T-cell (primary cell): ENCODE measurements at regions of chr17 and their contacts with region 1.

Region 1: DNA sequence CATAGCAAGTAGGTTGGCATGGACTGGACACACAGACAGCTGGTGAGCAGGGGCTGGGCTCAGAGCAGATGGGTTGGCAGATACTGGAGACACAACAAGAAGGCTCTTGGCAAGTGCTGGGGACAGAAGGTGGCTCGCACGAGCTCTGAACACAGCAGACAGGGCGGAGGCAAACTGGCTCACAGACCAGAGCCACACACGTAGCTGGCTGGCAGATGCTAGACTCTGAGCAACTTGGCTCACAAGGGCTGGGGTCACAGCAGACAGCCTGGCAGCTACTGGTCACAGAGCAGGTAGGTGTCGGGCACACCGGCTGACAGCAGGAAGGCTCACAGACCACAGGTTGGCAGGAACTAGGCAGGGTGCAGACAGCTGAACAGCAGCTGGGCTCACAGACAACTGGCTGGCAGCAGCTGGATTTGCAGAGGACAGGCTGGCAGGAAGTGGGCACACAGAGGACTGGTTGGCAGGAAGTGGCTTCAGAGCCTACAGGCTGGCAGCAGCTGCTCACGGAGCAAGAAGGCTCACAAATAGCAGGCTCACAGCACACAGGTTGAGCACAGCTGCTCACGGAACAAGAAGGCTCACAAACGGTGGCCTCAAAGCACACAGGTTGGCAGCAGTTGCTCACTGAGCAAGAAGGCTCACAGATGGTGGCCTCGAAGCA is 725 bp downstream of the KRTAP16-1 start:
- DNase-seq: peak; percentile 67 to 97 (median 86)
- ATAC-seq: peak; percentile 85 to 88 (median 86)
- H3K4me3 ChIP-seq: peak overlapping the region; percentile 30 to 35
- H3K4me3 Mint-ChIP-seq: peak overlapping the region; percentile 55 to 77 (median 71)
- H3K27ac ChIP-seq: peak overlapping the region; percentile 87
- H3K27ac Mint-ChIP-seq: peak overlapping the region; percentile 98
- H3K4me1 ChIP-seq: peaks cover 28 to 50% of the 10 kb centered on the region in 2 experiments
- H3K4me1 Mint-ChIP-seq: peaks cover 61 to 71% (median 64%) of the 10 kb centered on the region in 3 donors
- H3K27me3 ChIP-seq: no peaks in the 10 kb centered on the region
- H3K27me3 Mint-ChIP-seq: no peaks in the 10 kb centered on the region

Region 2: GRCh38 chr17:41322094-41322902 is 13.9 kb after region 1 on chr17:
- CTCF ChIA-PET with region 1: interaction called in 1 of 2 experiments, 21 read pairs
- POLR2A ChIA-PET with region 1: interaction called, 3 to 4 read pairs
- DNase-seq: peak in 3 of 35 experiments; percentile 32 to 73 (median 42)
- ATAC-seq: peak; percentile 70 to 80 (median 75)
- H3K4me3 ChIP-seq: no peak overlapping the region
- H3K4me3 Mint-ChIP-seq: no peak overlapping the region
- H3K27ac ChIP-seq: no peak overlapping the region
- H3K27ac Mint-ChIP-seq: peak overlapping the region; percentile 72 to 81
- H3K4me1 ChIP-seq: peaks cover 2 to 52% of the 10 kb centered on the region in 2 experiments
- H3K4me1 Mint-ChIP-seq: peaks cover 30 to 56% (median 52%) of the 10 kb centered on the region in 3 donors
- H3K27me3 ChIP-seq: no peaks in the 10 kb centered on the region
- H3K27me3 Mint-ChIP-seq: no peaks in the 10 kb centered on the region